ENCODE measurements at regions of chr6 and their contacts with region 1.

Region 1: GRCh38 chr6:13336553-13336952 is 8.2 kb upstream of the TBC1D7 start:
- DNase-seq: peak; percentile 87
- ATAC-seq: peak; percentile 69
- H3K4me3 Mint-ChIP-seq: no peak overlapping the region
- H3K27ac Mint-ChIP-seq: no peak overlapping the region
- H3K4me1 Mint-ChIP-seq: peaks cover 10% of the 10 kb centered on the region
- H3K27me3 Mint-ChIP-seq: no peaks in the 10 kb centered on the region

Region 2: DNA sequence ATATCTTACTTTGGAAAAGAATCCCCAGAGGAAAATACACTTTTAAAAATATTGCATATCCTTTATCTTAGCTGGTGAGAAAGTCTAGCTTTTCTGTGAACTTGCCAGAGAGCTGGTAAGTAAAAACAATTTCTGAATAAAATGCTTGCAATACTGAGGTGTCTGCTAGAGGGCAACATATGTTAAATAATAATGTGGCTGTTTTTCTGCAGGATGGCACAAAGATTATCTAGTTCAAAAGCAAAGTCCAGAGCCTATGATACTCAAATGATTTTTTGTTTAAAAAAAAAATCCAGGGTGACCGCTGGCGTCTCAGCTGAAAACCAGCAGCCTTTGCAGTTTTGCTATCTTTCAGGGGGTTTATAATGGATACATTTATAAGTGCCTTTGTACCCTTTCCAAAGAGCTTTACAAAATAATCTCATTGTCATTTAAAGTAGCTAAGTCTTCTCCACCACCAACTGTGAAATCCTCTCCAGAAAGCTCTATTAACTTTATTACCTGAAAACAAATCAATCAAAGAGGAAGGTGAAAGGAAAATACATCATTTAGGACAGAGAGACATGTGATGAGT is 425.1 kb before region 1 on chr6:
- CTCF ChIA-PET with region 1: interaction called, 16 read pairs
- POLR2A ChIA-PET with region 1: no interaction called
- intact Hi-C with region 1: loop called (anchors 1 to 2 kb)
- DNase-seq: no peak
- ATAC-seq: no peak
- H3K4me3 Mint-ChIP-seq: no peak overlapping the region
- H3K27ac Mint-ChIP-seq: no peak overlapping the region
- H3K4me1 Mint-ChIP-seq: no peaks in the 10 kb centered on the region
- H3K27me3 Mint-ChIP-seq: peaks cover 8% of the 10 kb centered on the region

Region 3: DNA sequence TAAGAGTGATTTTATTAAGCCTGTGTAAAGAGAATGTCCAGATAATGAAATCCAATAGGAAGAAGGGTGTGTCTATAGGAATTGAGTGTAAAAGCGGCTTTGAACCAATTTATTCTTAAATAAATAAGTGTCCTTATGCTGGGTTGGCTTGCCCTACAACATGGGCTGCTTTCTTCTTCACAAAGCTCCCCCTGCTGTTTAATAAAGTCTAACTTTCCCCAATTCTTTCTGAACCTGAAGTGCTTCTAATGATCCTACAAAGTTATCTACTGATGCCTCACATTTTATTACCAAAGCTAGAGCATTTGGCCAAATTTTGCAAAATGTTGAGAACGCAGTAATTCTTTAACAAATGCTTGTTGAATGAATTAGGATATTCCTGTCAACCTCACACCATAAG is 201.5 kb after region 1 on chr6:
- CTCF ChIA-PET with region 1: interaction called, 4 read pairs
- POLR2A ChIA-PET with region 1: no interaction called
- intact Hi-C with region 1: loop called (anchors 1 kb)
- DNase-seq: no peak
- ATAC-seq: no peak
- H3K4me3 Mint-ChIP-seq: no peak overlapping the region
- H3K27ac Mint-ChIP-seq: no peak overlapping the region
- H3K4me1 Mint-ChIP-seq: no peaks in the 10 kb centered on the region
- H3K27me3 Mint-ChIP-seq: no peaks in the 10 kb centered on the region

Measured in activated CD4-positive, alpha-beta T cell treated with anti-CD3 and anti-CD28 coated beads for 36 hours (primary cell).